ENCODE measurements at regions of chr17 and their contacts with region 1.

Region 1: DNA sequence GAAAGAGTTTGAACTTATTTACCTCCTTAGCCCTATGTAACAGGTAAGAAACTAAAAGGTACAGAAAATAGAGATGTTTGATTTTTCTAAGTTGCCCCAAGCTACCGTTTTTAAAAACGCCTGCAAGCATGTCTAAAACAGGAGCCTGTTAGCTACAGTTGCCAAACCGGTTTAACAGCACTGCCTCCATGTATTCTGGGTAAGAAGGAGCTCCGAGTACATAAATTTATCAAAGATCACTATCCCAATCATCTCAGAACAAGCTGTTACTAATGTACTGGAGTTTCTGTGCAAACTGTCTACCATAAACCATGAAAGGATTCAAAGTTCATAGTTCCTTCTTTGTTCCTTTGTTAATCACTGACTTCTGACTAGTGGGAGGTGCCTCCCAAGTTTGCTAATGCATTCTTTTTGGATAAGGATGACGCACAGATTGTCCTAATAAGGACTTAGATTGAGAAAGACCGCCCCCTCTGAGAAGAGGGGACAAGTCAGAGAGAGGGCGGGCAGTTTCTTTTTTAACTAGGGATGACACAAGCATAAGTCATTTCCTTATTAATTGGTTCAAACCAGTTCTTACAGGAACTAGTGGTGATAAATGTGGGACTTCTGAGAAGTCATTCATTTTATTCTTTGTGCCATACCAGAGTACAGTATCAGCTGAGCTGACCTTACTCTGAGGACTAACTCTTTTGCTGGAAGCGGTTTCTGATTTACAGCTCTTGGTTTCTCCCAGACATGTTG is 55.3 kb downstream of the TUBD1 start:
- DNase-seq: peak; percentile 63 to 94
- H3K4me3 ChIP-seq: peak overlapping the region; percentile 55 to 81
- H3K27ac ChIP-seq: peak overlapping the region; percentile 91 to 93
- H3K4me1 ChIP-seq: peaks cover 8 to 15% of the 10 kb centered on the region in 2 donors
- H3K27me3 ChIP-seq: no peaks in the 10 kb centered on the region
- CTCF ChIP-seq: no peak

Region 2: DNA sequence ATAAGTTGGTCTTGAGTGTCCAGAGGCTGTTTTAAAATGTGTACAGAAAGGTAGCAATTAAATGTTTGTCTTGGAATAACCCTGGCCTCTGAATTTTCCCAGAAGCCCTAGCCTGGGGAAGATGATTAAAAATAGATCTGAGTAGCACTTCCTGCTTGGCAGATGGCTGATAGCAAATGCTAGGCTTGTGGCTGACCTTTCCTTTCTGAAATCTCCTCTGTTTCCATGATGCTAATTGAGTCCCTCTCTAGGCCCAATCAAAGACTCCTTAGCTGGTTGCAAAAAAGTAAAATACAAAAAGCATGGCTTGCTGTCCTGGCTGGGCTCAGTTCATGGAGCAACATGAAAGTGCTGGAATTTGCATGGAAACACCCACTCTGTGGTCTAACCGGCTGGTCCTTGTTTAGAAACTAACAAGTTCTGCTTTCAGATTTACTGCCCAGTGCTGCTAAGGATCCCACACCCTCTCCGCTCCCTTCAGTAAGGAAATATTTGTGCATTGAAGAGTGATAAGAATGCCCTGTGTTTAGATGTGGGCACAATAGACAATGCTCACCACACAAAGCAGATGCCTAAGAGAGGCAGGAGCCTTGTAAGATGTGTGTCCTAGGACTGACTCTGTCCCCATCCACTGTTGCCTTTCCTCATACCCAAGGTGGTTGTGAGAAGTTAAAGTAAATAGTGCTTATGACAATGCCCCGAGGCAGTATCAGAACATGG is 465.2 kb before region 1 on chr17:
- intact Hi-C with region 1: loop called (anchors 10 kb)
- DNase-seq: peak in 1 of 2 donors; percentile 89
- H3K4me3 ChIP-seq: peak overlapping the region; percentile 23 to 50
- H3K27ac ChIP-seq: peak overlapping the region; percentile 94 to 95
- H3K4me1 ChIP-seq: peaks cover 54 to 95% of the 10 kb centered on the region in 2 donors
- H3K27me3 ChIP-seq: no peaks in the 10 kb centered on the region
- CTCF ChIP-seq: no peak

Region 3: DNA sequence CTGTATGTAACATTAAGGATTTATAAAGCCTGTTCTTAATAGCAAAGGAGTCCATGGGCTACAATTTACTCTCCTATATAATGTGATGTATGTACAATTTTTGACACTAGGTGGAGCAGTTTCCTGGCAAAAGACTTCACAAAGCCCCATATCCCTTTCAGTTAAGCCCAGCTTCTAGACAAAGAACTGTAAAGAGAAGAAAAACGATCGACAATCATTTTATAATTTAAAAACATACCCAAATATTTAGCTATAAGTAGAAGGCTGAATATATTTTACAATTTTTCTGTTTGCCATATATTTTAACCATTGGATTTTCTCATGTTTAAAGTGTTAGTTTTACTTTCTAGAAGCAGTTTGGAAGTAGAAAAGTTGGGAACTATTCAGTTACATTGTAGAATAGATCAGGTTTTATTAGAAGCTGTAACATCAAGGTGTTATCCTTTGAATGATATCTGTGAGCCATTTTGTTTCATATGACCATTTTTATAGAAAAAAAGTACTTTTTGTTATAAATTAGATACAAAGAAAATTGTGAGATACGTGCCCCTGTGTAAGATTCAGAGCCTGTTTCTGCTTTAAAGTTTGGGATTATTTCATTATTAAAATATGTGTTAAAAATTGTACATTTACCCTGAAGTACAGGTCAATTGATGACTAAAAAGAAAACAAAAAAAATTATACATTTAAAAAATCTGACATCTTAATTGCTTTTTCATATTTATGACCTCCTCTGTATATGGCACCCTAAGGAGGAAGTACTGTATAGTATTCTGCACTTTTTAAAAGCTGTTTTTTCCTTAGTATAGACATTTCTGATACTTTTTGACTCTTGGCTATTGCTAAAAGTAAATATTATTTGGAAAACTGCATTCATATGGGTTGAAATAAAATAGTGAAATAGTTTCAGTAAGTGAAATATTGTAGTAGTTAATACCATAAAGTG is 83.7 kb before region 1 on chr17:
- intact Hi-C with region 1: loop called (anchors 1 kb)
- DNase-seq: no peak
- H3K4me3 ChIP-seq: peak overlapping the region in 1 of 2 donors; percentile 30
- H3K27ac ChIP-seq: peak overlapping the region; percentile 56 to 65
- H3K4me1 ChIP-seq: peaks cover 0 to 17% of the 10 kb centered on the region in 2 donors
- H3K27me3 ChIP-seq: no peaks in the 10 kb centered on the region
- CTCF ChIP-seq: peak; percentile 60 to 69 (median 66)

Region 4: DNA sequence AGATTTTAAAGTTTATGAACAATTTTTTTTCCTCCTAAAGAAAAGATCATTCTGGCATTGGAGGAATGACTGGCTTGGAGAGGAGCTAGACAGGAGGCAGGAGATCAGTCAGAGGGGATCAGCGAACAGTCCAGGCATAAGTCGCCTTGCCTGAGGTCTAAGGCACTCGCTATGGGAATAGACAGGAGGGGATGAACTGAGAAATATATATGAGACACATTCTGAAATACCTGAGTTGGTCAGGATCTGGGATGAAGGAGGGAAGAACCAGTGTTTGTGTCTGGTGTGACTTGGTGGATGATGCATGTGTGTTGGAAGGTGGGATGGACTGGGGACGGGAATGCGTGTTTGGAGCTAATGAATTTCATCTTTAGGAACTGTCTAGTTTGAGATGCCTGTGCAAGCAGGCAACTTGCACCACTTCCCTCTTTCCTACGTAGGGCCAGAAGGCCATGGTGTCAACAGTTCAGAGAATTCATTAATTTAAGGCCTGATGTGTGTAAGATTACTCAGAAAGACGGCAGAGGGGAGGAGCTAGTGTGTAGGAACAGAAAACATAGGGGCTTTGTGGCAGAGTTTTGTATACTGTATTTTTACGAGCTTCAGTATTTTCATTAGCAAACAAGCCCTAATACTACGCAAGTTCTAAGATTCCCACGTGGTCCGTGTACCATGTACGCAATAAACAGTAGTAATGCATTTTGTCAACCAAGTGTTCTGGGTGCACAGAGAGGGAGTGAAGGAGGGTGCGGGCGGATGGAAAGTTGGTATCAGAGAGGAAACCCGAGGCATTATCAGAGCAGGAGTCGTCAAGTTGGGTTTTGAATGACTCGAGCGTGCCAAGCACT is 240.4 kb after region 1 on chr17:
- intact Hi-C with region 1: no loop called
- DNase-seq: no peak
- H3K4me3 ChIP-seq: peak overlapping the region; percentile 90 to 92
- H3K27ac ChIP-seq: peak overlapping the region; percentile 68 to 76
- H3K4me1 ChIP-seq: peaks cover 0 to 7% of the 10 kb centered on the region in 2 donors
- H3K27me3 ChIP-seq: no peaks in the 10 kb centered on the region
- CTCF ChIP-seq: no peak

Measured in ascending aorta (tissue), 2 donors.